Activated naive CD4-positive, alpha-beta T cell treated with anti-CD3 and anti-CD28 coated beads for 36 hours (primary cell): ENCODE measurements at regions of chr16 and their contacts with region 1.

Region 1: DNA sequence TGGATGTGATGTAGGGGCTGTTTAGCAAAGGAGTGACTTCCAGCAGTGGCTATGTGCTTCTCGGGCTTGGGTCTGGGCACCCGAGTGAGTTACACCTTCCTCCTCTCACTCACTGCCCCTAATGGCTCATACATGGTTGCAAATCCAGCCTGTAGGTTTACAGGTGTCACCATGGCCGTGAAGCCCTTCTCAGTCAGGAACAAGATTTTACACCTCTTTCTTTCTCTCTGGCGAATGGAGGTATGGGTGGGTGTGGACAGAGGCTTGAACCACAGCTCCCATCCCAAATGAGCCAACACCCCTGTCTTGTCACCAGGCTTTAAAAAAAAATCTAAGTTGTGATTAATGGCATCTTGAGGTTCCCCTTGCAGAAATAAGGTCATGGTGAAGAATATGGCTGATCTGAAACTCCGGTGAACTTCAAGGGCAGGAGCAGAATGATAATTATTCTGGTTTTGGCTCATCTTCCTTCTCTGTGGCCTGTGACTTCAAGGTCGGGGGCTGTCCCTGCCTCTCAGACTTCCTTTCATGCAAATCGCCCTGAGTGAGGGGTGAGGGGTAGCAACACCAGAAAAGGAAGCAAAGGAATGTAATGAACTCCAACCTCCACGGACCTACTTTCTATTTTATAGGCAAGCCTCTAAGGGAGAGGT is 331.2 kb downstream of the MAF start:
- DNase-seq: peak; percentile 90
- H3K4me3 Mint-ChIP-seq: peak overlapping the region; percentile 30
- H3K27ac Mint-ChIP-seq: peak overlapping the region; percentile 89
- H3K4me1 Mint-ChIP-seq: peaks cover 78% of the 10 kb centered on the region
- H3K27me3 Mint-ChIP-seq: peaks cover 29% of the 10 kb centered on the region

Region 2: DNA sequence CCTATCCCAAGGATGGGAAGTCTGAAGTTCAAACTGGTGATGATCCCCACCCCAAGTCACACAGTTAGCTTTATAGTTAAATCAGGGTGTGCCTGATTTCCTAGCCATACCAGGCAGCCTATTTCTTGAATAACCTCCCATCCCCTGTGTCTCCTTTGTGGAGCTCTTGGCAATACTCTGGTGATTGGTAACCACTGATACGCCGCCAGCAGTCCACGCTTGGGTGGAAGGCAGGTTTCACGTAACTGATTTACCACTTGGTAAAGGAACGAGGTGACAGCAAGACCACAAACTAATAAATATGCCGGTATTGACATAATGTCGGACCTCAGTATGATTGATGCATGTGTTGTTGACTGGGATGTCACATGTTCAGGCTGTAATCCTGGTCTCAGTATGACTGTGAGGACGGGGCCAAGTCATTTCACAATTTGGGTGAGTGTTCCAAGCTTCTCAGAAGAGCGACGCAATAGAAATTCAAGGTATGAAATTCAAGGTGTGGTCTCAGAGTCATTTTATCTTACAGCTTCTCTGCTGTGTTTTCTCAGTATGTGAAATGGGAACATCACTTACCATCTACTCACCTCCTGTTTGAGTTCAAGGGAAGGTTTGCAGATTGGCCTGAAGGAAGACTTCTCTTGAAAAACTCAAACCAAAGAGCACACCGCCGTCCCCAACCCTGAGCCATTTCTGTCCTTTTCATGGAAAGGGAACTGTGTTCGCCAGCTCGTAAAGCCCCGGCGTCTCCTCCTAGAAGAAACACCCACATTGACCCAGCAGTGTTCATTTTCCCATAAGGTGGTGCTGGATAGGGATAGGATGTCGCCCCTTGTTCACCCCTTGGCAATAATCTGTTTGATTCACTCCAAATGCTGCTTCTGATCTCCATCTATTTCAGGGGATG is 491.0 kb before region 1 on chr16:
- CTCF ChIA-PET with region 1: interaction called, 4 read pairs
- intact Hi-C with region 1: loop called (anchors 1 kb)
- DNase-seq: peak; percentile 67
- H3K4me3 Mint-ChIP-seq: no peak overlapping the region
- H3K27ac Mint-ChIP-seq: peak overlapping the region; percentile 89
- H3K4me1 Mint-ChIP-seq: peaks cover 20% of the 10 kb centered on the region
- H3K27me3 Mint-ChIP-seq: no peaks in the 10 kb centered on the region

Region 3: GRCh38 chr16:79089735-79090284 is 179.5 kb before region 1 on chr16:
- CTCF ChIA-PET with region 1: interaction called, 9 read pairs
- intact Hi-C with region 1: loop called (anchors 2 kb)
- DNase-seq: peak; percentile 78
- H3K4me3 Mint-ChIP-seq: peak overlapping the region; percentile 37
- H3K27ac Mint-ChIP-seq: peak overlapping the region; percentile 88
- H3K4me1 Mint-ChIP-seq: peaks cover 45% of the 10 kb centered on the region
- H3K27me3 Mint-ChIP-seq: no peaks in the 10 kb centered on the region

Region 4: GRCh38 chr16:79316004-79316458 is 46.7 kb after region 1 on chr16:
- CTCF ChIA-PET with region 1: no interaction called
- intact Hi-C with region 1: loop called (anchors 1 kb)
- DNase-seq: peak; percentile 69
- H3K4me3 Mint-ChIP-seq: no peak overlapping the region
- H3K27ac Mint-ChIP-seq: peak overlapping the region; percentile 25
- H3K4me1 Mint-ChIP-seq: peaks cover 15% of the 10 kb centered on the region
- H3K27me3 Mint-ChIP-seq: peaks cover 21% of the 10 kb centered on the region

Region 5: DNA sequence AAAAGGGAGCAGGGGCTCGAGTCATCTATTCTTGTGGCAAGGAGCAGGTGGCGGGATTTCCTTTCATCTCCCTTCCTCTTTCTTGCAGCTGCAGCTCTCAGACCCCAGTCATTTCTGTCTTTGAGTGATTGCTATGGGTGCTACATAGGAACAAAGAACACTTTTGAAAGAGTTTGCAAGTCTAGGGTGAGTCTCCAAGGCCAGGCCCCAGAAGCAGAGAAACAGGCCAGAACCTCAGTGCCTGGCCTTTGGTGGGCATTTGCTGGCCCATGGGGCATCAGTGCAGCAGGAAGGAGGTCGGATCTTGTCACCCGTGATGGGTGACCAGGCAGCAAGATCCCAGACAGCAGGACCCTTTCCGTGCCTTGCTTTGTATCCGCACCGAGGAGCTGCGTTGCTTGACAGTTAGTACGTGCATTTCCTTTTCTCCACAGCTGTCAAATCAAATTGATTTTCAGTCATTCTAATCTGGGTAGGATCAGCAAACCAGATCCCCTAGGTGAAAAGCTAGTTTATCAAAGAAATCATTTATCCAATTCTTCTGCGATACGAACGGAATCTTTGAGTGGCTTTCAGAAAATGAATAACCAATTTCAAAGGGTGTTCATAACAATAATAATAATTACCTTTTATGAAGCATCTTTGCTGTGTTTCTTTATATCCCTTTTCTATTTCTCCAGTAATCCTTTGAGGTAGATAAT is 575.8 kb after region 1 on chr16:
- CTCF ChIA-PET with region 1: no interaction called
- intact Hi-C with region 1: loop called (anchors 5 kb)
- DNase-seq: peak; percentile 37
- H3K4me3 Mint-ChIP-seq: no peak overlapping the region
- H3K27ac Mint-ChIP-seq: no peak overlapping the region
- H3K4me1 Mint-ChIP-seq: peaks cover 19% of the 10 kb centered on the region
- H3K27me3 Mint-ChIP-seq: peaks cover 4% of the 10 kb centered on the region

Region 6: DNA sequence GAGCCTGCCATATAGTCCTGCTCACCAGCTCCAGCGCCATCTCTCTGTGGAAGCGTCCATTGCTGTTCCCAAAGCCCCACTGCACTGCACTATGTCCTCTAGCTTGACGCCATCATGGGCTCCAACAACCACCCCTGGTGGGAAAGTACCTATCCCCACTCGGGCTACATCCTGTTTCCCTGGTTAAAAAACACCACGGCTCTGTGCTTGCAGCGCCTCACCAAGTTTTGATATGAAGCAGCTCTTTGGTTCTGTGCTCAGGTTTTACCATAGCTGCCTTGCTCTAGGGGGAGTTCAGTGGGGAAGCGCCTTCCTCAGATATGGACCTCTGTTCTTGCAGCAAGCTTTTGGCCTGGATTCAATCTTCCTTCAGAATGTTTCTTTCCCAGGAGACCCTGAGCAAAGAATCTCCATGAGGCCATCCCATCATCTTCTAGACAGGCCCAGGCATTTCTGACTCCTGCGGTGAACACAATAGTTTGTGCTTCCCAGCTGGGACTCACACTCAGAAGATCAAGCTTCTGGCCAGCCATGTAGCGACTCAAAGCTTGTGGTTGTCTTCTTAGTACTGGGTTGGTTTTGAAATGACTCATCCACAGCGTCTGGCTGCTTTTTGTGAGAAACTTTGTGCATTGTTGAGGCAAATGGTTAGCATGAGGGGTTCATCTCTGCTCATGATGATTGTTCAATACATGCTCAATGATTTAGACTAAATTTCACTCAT is 1310.9 kb after region 1 on chr16:
- CTCF ChIA-PET with region 1: no interaction called
- intact Hi-C with region 1: loop called (anchors 1 kb)
- DNase-seq: peak; percentile 90
- H3K4me3 Mint-ChIP-seq: peak overlapping the region; percentile 59
- H3K27ac Mint-ChIP-seq: peak overlapping the region; percentile 91
- H3K4me1 Mint-ChIP-seq: peaks cover 46% of the 10 kb centered on the region
- H3K27me3 Mint-ChIP-seq: no peaks in the 10 kb centered on the region